ENCODE measurements at regions of chr1 and their contacts with region 1.

Region 1: GRCh38 chr1:202315576-202316168 is 26.1 kb downstream of the UBE2T start:
- DNase-seq: peak; percentile 78 to 86 (median 81)
- H3K4me3 ChIP-seq: no peak overlapping the region
- H3K27ac ChIP-seq: no peak overlapping the region
- H3K4me1 ChIP-seq: peaks cover 0 to 6% (median 0%) of the 10 kb centered on the region in 4 experiments
- H3K27me3 ChIP-seq: peaks cover 0 to 20% (median 9%) of the 10 kb centered on the region in 5 experiments

Region 2: DNA sequence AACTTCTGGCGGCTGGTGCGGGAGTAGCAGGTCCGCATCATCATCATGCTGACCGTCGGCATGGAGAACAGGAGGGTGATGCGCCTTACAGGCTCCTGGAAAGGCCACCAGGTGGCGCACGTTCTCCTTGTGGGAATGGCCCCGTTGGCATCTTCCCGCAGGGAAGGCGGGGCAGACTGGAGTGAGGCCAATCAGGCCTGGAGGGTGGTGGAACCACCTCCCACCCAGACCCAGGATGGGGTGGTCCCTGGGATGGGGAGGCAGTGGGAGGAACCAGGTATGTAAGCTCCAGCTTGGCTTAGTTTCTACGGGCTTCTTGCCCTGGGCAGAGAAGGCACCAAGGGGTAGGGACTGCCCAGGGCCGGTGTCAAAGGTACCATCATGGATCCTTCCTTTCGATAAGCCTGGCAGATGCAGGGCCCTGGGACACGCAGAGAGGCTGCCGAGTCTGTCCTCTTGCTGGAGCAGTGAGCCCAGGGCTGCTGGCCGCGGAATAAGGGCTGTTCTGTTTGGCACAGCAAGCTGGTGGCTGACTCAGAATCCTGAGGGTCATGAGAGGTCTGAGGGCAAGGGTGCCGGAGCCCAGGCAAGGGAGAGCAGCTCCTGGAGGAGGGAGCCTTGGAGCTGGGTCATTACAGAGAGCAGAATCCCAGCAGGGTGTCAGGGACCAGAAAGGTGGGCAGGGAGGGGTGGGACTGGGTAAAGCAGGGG is 130.8 kb before region 1 on chr1:
- CTCF ChIA-PET with region 1: interaction called, 119 read pairs
- POLR2A ChIA-PET with region 1: no interaction called
- DNase-seq: peak; percentile 82 to 87 (median 86)
- H3K4me3 ChIP-seq: no peak overlapping the region
- H3K27ac ChIP-seq: no peak overlapping the region
- H3K4me1 ChIP-seq: peaks cover 0 to 3% (median 1%) of the 10 kb centered on the region in 4 experiments
- H3K27me3 ChIP-seq: no peaks in the 10 kb centered on the region

Region 3: GRCh38 chr1:202264300-202264699 is 51.4 kb before region 1 on chr1:
- CTCF ChIA-PET with region 1: interaction called, 10 read pairs
- POLR2A ChIA-PET with region 1: no interaction called
- DNase-seq: peak in 1 of 3 donors; percentile 43
- H3K4me3 ChIP-seq: no peak overlapping the region
- H3K27ac ChIP-seq: no peak overlapping the region
- H3K4me1 ChIP-seq: peaks cover 0 to 10% (median 3%) of the 10 kb centered on the region in 4 experiments
- H3K27me3 ChIP-seq: peaks cover 0 to 13% (median 12%) of the 10 kb centered on the region in 5 experiments

Region 4: GRCh38 chr1:202283379-202283844 is 32.3 kb before region 1 on chr1:
- CTCF ChIA-PET with region 1: interaction called, 11 read pairs
- POLR2A ChIA-PET with region 1: no interaction called
- DNase-seq: peak; percentile 60 to 92 (median 91)
- H3K4me3 ChIP-seq: no peak overlapping the region
- H3K27ac ChIP-seq: no peak overlapping the region
- H3K4me1 ChIP-seq: peaks cover 6 to 36% (median 17%) of the 10 kb centered on the region in 4 experiments
- H3K27me3 ChIP-seq: peaks cover 0 to 64% (median 40%) of the 10 kb centered on the region in 5 experiments

Region 5: DNA sequence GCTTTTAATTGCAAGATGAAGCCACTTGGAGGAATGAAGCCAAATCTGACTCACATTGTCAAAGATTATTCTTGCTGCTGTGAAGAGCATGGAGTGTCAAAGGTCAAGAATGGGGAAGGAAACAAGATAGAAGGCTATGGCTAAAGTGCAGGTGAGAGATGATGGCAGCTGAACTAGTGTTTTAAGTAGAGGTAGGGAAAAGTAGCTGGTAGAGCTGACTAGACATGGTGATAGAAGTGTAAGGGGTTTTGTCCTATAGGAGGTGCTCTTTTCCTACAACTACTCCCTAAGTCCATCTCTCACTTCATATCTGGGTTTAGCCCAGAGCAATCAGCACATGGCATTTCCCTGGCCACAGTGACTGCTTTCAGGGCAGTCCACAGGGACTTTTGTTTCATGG is 14.2 kb after region 1 on chr1:
- CTCF ChIA-PET with region 1: interaction called, 24 read pairs
- POLR2A ChIA-PET with region 1: no interaction called
- DNase-seq: no peak
- H3K4me3 ChIP-seq: no peak overlapping the region
- H3K27ac ChIP-seq: no peak overlapping the region
- H3K4me1 ChIP-seq: no peaks in the 10 kb centered on the region
- H3K27me3 ChIP-seq: no peaks in the 10 kb centered on the region

Measured in common myeloid progenitor, CD34-positive (primary cell).